ENCODE measurements at regions of chr19 and their contacts with region 1.

Region 1: GRCh38 chr19:38402967-38403861 is at the start of gene FAM98C:
- DNase-seq: peak; percentile 98 to 99
- H3K4me3 ChIP-seq: peak within 1 kb of the TSS; percentile 96
- H3K4me3 Mint-ChIP-seq: peak within 1 kb of the TSS; percentile 99
- H3K27ac Mint-ChIP-seq: peak within 1 kb of the TSS; percentile 97
- H3K4me1 ChIP-seq: peaks cover 10% of the 10 kb centered on the region; the same call in 1 of the 2 replicates
- H3K4me1 Mint-ChIP-seq: no peaks in the 10 kb centered on the region
- H3K27me3 ChIP-seq: no peaks in the 10 kb centered on the region
- H3K27me3 Mint-ChIP-seq: peaks cover 5% of the 10 kb centered on the region
- CTCF ChIP-seq: peak; percentile 71 to 97
- total RNA-seq, gene FAM98C: 17.3 and 19.7 TPM in 2 replicates

Region 2: GRCh38 chr19:38142176-38143035 is 260.8 kb before region 1 on chr19:
- CTCF ChIA-PET with region 1: no interaction called
- POLR2A ChIA-PET with region 1: no interaction called
- intact Hi-C with region 1: no loop called
- DNase-seq: peak; percentile 71 to 77
- H3K4me3 ChIP-seq: no peak overlapping the region
- H3K4me3 Mint-ChIP-seq: no peak overlapping the region
- H3K27ac Mint-ChIP-seq: no peak overlapping the region
- H3K4me1 ChIP-seq: no peaks in the 10 kb centered on the region
- H3K4me1 Mint-ChIP-seq: no peaks in the 10 kb centered on the region
- H3K27me3 ChIP-seq: no peaks in the 10 kb centered on the region; the same call in 1 of the 2 replicates
- H3K27me3 Mint-ChIP-seq: no peaks in the 10 kb centered on the region
- CTCF ChIP-seq: peak; percentile 84 to 87

Region 3: GRCh38 chr19:38290631-38291157 is 112.5 kb before region 1 on chr19:
- CTCF ChIA-PET with region 1: no interaction called
- POLR2A ChIA-PET with region 1: no interaction called
- intact Hi-C with region 1: no loop called
- DNase-seq: no peak
- H3K4me3 ChIP-seq: no peak overlapping the region
- H3K4me3 Mint-ChIP-seq: no peak overlapping the region
- H3K27ac Mint-ChIP-seq: peak overlapping the region; percentile 40
- H3K4me1 ChIP-seq: no peaks in the 10 kb centered on the region
- H3K4me1 Mint-ChIP-seq: no peaks in the 10 kb centered on the region
- H3K27me3 ChIP-seq: no peaks in the 10 kb centered on the region
- H3K27me3 Mint-ChIP-seq: no peaks in the 10 kb centered on the region
- CTCF ChIP-seq: no peak

Region 4: DNA sequence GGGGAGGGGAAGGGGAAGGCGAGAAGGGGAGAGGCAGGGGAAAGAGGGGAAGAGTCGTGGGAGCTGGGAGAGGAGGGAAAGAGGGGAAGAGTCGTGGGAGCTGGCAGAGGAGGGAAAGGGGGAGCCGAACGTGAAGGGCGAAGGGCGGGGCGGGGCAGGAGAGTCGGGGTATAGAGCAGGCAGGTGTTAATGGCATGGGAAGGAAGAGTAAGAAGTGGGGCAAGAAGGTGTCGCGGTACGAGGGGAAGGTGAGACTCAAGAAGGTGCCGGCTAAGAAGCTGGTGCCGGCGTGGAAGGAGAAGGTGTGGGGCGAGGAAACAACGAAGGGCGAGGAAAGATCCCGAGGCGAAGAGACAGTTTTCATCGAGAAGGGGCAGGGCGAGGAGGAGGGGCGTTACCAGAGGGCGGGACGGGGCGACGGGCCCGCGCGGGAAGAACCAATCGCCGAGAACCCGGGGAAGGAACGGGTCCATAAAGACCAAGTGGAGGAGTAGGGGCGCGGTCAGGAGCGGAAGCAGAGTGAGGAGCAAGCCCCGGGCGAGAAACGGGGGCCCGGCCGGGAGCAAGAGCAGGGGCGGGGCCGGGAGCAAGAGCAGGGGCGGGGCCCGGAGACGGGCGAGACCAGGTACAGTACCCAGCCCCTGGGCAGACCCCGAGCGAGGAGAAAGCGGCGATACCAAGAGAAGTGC is 67.1 kb before region 1 on chr19:
- CTCF ChIA-PET with region 1: interaction called, 10 read pairs
- POLR2A ChIA-PET with region 1: no interaction called
- intact Hi-C with region 1: no loop called
- DNase-seq: peak; percentile 98 to 99
- H3K4me3 ChIP-seq: peak overlapping the region; percentile 93
- H3K4me3 Mint-ChIP-seq: peak overlapping the region; percentile 93
- H3K27ac Mint-ChIP-seq: peak overlapping the region; percentile 73
- H3K4me1 ChIP-seq: peaks cover 21% of the 10 kb centered on the region
- H3K4me1 Mint-ChIP-seq: peaks cover 7% of the 10 kb centered on the region
- H3K27me3 ChIP-seq: no peaks in the 10 kb centered on the region
- H3K27me3 Mint-ChIP-seq: no peaks in the 10 kb centered on the region
- CTCF ChIP-seq: no peak

Region 5: DNA sequence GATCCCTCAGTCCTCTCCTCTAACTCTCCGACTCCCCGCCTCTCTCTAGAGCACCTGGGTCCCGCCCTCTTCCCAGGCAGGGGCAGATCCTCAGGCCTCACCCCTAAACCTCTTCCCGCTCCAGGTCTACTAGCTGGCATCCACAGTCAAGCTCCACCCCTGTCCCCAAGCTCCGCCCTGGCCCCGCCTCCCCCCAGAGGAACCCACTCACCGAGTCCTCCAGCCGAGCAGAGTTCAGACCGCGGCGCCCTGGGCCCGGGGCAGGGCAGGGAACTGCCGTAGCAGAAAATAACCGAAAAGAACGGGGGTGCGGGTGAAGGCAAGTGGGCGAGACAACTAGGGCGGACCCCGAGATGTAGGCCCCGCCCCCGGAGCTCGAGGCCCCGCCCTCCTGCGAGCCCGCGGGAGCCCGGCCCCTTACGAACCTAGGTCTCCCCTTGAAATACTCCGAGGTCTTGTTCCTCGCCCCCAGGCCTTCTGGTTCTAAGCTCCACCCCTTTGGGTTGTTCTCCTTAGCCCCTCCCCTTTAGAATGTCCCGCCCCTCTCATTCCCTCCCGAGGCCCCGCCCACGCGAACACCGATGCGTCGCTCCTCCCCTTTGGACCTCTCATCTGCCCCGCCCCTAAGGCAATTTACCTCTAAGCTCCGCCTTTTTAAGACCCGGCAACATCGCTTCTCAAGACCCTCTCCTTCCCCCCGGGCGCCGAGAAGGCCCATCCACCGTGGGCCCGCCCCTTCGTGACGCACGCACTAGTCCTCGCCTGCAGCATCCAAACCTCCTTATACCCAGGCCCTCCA is 15.5 kb before region 1 on chr19 and contains the start of gene GGN:
- CTCF ChIA-PET with region 1: interaction called, 39 read pairs
- POLR2A ChIA-PET with region 1: interaction called, 21 read pairs
- intact Hi-C with region 1: loop called (anchors 1 kb)
- DNase-seq: peak; percentile 91 to 94
- H3K4me3 ChIP-seq: peak within 1 kb of the TSS; percentile 60
- H3K4me3 Mint-ChIP-seq: peak within 1 kb of the TSS; percentile 83
- H3K27ac Mint-ChIP-seq: peak within 1 kb of the TSS; percentile 43
- H3K4me1 ChIP-seq: peaks cover 25% of the 10 kb centered on the region
- H3K4me1 Mint-ChIP-seq: peaks cover 18% of the 10 kb centered on the region
- H3K27me3 ChIP-seq: no peaks in the 10 kb centered on the region
- H3K27me3 Mint-ChIP-seq: no peaks in the 10 kb centered on the region
- CTCF ChIP-seq: no peak
- total RNA-seq, gene GGN: 0.79 TPM in 1 of 2 replicates, not detected in the other

Region 6: GRCh38 chr19:38433268-38433733 is 30.1 kb after region 1 on chr19 and contains the start of gene RYR1:
- CTCF ChIA-PET with region 1: no interaction called
- POLR2A ChIA-PET with region 1: no interaction called
- intact Hi-C with region 1: no loop called
- DNase-seq: peak in 1 of 2 experiments; percentile 27
- H3K4me3 ChIP-seq: no peak within 1 kb of the TSS
- H3K4me3 Mint-ChIP-seq: no peak within 1 kb of the TSS
- H3K27ac Mint-ChIP-seq: no peak within 1 kb of the TSS
- H3K4me1 ChIP-seq: no peaks in the 10 kb centered on the region
- H3K4me1 Mint-ChIP-seq: peaks cover 7% of the 10 kb centered on the region
- H3K27me3 ChIP-seq: no peaks in the 10 kb centered on the region
- H3K27me3 Mint-ChIP-seq: peaks cover 8% of the 10 kb centered on the region
- CTCF ChIP-seq: no peak
- total RNA-seq, gene RYR1: 5.6 and 5.9 TPM in 2 replicates

Region 7: GRCh38 chr19:38478273-38478967 is 75.2 kb after region 1 on chr19:
- CTCF ChIA-PET with region 1: interaction called, 27 read pairs
- POLR2A ChIA-PET with region 1: no interaction called
- intact Hi-C with region 1: no loop called
- DNase-seq: peak; percentile 49 to 57
- H3K4me3 ChIP-seq: no peak overlapping the region
- H3K4me3 Mint-ChIP-seq: no peak overlapping the region
- H3K27ac Mint-ChIP-seq: no peak overlapping the region
- H3K4me1 ChIP-seq: no peaks in the 10 kb centered on the region
- H3K4me1 Mint-ChIP-seq: no peaks in the 10 kb centered on the region
- H3K27me3 ChIP-seq: no peaks in the 10 kb centered on the region
- H3K27me3 Mint-ChIP-seq: peaks cover 7% of the 10 kb centered on the region
- CTCF ChIP-seq: peak in 1 of 2 experiments; percentile 48

Region 8: GRCh38 chr19:38618590-38619360 is 215.6 kb after region 1 on chr19 and contains the start of gene EIF3K:
- CTCF ChIA-PET with region 1: interaction called, 18 read pairs
- POLR2A ChIA-PET with region 1: interaction called, 9 read pairs
- intact Hi-C with region 1: no loop called
- DNase-seq: peak; percentile 99 to 100
- H3K4me3 ChIP-seq: peak within 1 kb of the TSS; percentile 81
- H3K4me3 Mint-ChIP-seq: peak within 1 kb of the TSS; percentile 99
- H3K27ac Mint-ChIP-seq: peak within 1 kb of the TSS; percentile 99
- H3K4me1 ChIP-seq: no peaks in the 10 kb centered on the region
- H3K4me1 Mint-ChIP-seq: peaks cover 7% of the 10 kb centered on the region
- H3K27me3 ChIP-seq: no peaks in the 10 kb centered on the region
- H3K27me3 Mint-ChIP-seq: no peaks in the 10 kb centered on the region
- CTCF ChIP-seq: no peak
- total RNA-seq, gene EIF3K: 354 and 380 TPM in 2 replicates

Region 9: GRCh38 chr19:38647368-38647965 is 244.3 kb after region 1 on chr19 and contains the start of gene ACTN4:
- CTCF ChIA-PET with region 1: interaction called, 8 read pairs
- POLR2A ChIA-PET with region 1: interaction called, 10 read pairs
- intact Hi-C with region 1: no loop called
- DNase-seq: peak; percentile 98 to 100
- H3K4me3 ChIP-seq: peak within 1 kb of the TSS; percentile 100
- H3K4me3 Mint-ChIP-seq: peak within 1 kb of the TSS; percentile 90
- H3K27ac Mint-ChIP-seq: peak within 1 kb of the TSS; percentile 88
- H3K4me1 ChIP-seq: peaks cover 30% of the 10 kb centered on the region
- H3K4me1 Mint-ChIP-seq: peaks cover 16% of the 10 kb centered on the region
- H3K27me3 ChIP-seq: no peaks in the 10 kb centered on the region
- H3K27me3 Mint-ChIP-seq: no peaks in the 10 kb centered on the region
- CTCF ChIP-seq: no peak
- total RNA-seq, gene ACTN4: 605 and 658 TPM in 2 replicates

Measured in Caco-2 (cell line).